ENCODE measurements at regions of chr6 and their contacts with region 1.

Region 1: GRCh38 chr6:32148289-32149091 is 3.2 kb downstream of the PRRT1 start:
- DNase-seq: no peak
- H3K4me3 ChIP-seq: peak overlapping the region in 3 of 4 donors; percentile 7 to 13 (median 11)
- H3K27ac ChIP-seq: peak overlapping the region in 1 of 4 donors; percentile 7
- H3K4me1 ChIP-seq: peaks cover 0 to 39% (median 34%) of the 10 kb centered on the region in 4 donors
- H3K27me3 ChIP-seq: no peaks in the 10 kb centered on the region
- CTCF ChIP-seq: no peak
- EP300 ChIP-seq: no peak
- POLR2A ChIP-seq: no peak

Region 2: DNA sequence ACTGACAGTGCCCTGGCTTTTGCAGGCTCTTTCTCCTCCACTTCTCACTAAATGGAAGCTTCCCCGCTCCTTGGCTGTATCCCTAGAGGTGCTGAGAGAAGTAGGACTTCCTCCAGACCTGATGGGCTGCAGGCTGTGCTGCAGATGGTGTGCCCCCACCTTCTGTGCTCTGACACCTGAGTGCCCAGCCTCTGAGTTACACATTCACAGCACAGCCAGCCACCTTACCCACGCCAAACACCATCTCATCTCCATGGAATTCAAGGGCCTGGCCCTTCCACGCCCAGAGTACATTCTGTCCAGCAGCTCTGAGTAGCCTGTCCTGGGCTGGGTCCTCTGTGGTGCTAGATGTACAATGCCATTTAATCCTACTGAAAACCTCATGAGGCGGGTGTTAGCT is 1221.8 kb before region 1 on chr6:
- intact Hi-C with region 1: no loop called
- DNase-seq: no peak
- H3K4me3 ChIP-seq: no peak overlapping the region
- H3K27ac ChIP-seq: no peak overlapping the region
- H3K4me1 ChIP-seq: no peaks in the 10 kb centered on the region
- H3K27me3 ChIP-seq: no peaks in the 10 kb centered on the region
- CTCF ChIP-seq: no peak
- EP300 ChIP-seq: no peak
- POLR2A ChIP-seq: no peak

Region 3: DNA sequence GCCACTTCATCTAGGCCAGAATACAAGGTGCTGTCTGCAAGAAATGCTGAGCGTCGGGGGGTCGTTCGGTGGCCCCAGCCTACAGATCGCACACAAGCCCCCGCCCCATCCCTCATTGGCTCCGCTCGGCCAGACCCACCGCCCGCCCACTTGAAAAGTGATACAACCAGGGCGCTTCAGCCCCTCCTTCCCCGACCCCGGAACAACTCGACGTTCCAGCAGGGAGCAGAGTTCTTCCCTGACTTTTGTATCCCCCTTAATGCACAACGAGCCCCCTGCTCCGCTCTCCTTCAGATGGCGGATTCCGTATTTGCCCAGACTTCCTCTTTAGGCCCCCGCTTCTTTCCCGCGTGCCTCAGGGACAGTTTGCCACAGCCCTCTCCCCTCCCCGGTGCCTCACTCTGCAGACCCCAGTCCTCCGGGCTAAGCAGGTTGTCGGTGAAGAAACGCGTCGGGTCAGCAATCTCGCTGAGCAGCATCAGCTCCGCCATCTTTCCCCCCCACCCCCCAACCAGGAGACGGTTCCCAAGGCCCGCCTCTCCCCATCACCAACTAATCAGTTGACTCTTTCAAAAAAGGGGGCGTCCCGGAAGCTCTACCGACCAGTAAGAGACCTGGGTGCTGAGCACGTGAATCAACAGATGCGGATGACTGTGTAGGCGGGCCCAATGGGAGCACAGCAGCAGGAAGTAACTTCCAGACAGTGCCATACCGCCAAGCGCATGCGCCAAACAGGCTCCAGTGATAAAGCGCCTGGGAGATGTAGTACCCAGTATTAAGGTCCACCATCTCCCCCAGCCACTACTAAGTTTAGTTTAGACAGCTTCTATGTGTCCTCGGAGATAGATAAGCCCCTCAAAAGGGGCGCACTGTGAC is 20.5 kb before region 1 on chr6 and contains the start of gene ATF6B:
- intact Hi-C with region 1: loop called (anchors 1 kb)
- DNase-seq: peak; percentile 100
- H3K4me3 ChIP-seq: peak within 1 kb of the TSS; percentile 77 to 92 (median 83)
- H3K27ac ChIP-seq: peak within 1 kb of the TSS; percentile 91 to 94 (median 92)
- H3K4me1 ChIP-seq: peaks cover 0 to 36% (median 31%) of the 10 kb centered on the region in 4 donors
- H3K27me3 ChIP-seq: no peaks in the 10 kb centered on the region
- CTCF ChIP-seq: no peak
- EP300 ChIP-seq: no peak
- POLR2A ChIP-seq: peak; percentile 68 to 76
- total RNA-seq, gene ATF6B: 24.5 to 73.4 (median 24.8) TPM

Measured in sigmoid colon (tissue), 7 donors.